GM12878 (cell line): ENCODE measurements at regions of chr18 and their contacts with region 1.

Region 1: GRCh38 chr18:34707670-34708069 is 2.4 kb upstream of the DTNA start:
- DNase-seq: no peak
- ATAC-seq: no peak
- H3K4me3 ChIP-seq: no peak overlapping the region
- H3K27ac ChIP-seq: no peak overlapping the region
- H3K4me1 ChIP-seq: no peaks in the 10 kb centered on the region
- H3K27me3 ChIP-seq: peaks cover 0 to 3% of the 10 kb centered on the region in 2 experiments; a peak in 1 of 4 replicates
- CTCF ChIP-seq: no peak
- EP300 ChIP-seq: no peak
- POLR2A ChIP-seq: no peak
- RAD21 ChIP-seq: no peak

Region 2: DNA sequence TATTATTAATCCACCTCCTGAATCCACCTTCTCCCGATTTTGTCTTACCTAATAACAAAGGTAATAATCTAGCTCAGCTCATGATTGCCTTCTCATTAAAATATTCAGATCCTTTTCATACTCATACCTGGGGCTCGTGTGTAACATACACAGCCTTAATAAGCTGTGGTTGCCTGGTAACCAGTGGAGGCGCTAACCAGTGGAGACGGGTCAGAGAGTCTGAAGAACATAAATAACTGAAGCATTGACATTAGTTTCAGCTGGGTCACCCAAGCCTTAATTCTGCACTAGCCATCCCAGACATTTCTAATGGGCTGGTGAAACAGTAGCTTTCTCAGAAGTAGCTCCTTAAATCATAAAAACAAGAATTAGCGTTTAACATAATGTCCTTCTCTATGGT is 12.4 kb before region 1 on chr18:
- CTCF ChIA-PET with region 1: interaction called, 3 read pairs
- POLR2A ChIA-PET with region 1: interaction called, 3 read pairs
- RAD21 ChIA-PET with region 1: interaction called, 7 read pairs
- SMC1A ChIA-PET with region 1: interaction called, 11 read pairs
- in situ Hi-C with region 1: no loop called
- intact Hi-C with region 1: no loop called
- DNase-seq: no peak
- ATAC-seq: peak; percentile 78
- H3K4me3 ChIP-seq: no peak overlapping the region
- H3K27ac ChIP-seq: no peak overlapping the region
- H3K4me1 ChIP-seq: no peaks in the 10 kb centered on the region
- H3K27me3 ChIP-seq: no peaks in the 10 kb centered on the region
- CTCF ChIP-seq: no peak
- EP300 ChIP-seq: no peak
- POLR2A ChIP-seq: no peak
- RAD21 ChIP-seq: no peak